Prostate gland (tissue), 2 donors: ENCODE measurements at regions of chr12 and their contacts with region 1.

Region 1: GRCh38 chr12:6825398-6826124 is 2.6 kb upstream of the P3H3 start:
- DNase-seq: peak; percentile 77
- H3K4me3 ChIP-seq: no peak overlapping the region
- H3K27ac ChIP-seq: no peak overlapping the region
- H3K4me1 ChIP-seq: no peaks in the 10 kb centered on the region
- H3K27me3 ChIP-seq: no peaks in the 10 kb centered on the region
- CTCF ChIP-seq: peak; percentile 89 to 94 (median 93)
- POLR2A ChIP-seq: no peak

Region 2: GRCh38 chr12:6528887-6529235 is 296.7 kb before region 1 on chr12:
- intact Hi-C with region 1: no loop called
- DNase-seq: no peak
- H3K4me3 ChIP-seq: no peak overlapping the region
- H3K27ac ChIP-seq: no peak overlapping the region
- H3K4me1 ChIP-seq: peaks cover 6% of the 10 kb centered on the region
- H3K27me3 ChIP-seq: no peaks in the 10 kb centered on the region
- CTCF ChIP-seq: no peak
- POLR2A ChIP-seq: no peak

Region 3: GRCh38 chr12:6653987-6654386 is 171.6 kb before region 1 on chr12:
- intact Hi-C with region 1: no loop called
- DNase-seq: no peak
- H3K4me3 ChIP-seq: no peak overlapping the region
- H3K27ac ChIP-seq: no peak overlapping the region
- H3K4me1 ChIP-seq: no peaks in the 10 kb centered on the region
- H3K27me3 ChIP-seq: no peaks in the 10 kb centered on the region
- CTCF ChIP-seq: no peak
- POLR2A ChIP-seq: no peak

Region 4: DNA sequence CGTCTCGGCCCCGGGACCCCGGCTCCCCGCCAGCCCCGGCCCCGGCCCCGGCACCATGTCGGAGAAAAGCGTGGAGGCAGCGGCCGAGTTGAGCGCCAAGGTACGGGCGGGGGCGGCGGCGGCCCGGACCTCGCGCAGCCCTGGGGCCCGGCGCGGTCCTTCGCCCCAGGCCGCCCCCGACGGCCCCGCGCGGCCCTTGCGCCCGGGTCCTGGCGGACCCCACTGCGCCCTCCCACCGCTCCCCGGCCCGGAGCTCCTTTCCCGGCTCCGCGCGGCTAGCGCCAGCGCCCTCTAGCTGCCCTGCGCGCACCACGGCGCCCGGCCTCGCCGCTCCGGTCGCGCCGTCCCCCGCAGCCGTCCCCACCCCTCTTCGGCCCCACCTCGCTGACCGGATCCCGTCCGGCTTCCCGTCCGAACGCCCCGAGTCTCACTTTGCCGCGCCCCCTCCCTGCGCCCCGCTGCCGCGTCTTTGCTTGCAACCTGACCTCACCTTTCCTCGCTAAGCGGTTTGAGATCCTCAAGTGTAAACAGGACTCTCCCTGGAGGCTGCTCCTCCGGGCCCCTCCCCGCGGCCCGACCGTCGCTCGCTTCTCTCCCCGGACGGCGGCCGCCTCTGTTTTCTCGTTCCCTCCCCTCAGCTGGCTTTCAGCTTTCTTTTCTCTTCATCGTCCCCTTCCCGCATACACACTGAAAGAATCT is 58.8 kb before region 1 on chr12:
- intact Hi-C with region 1: loop called (anchors 5 kb)
- DNase-seq: peak; percentile 83
- H3K4me3 ChIP-seq: peak overlapping the region; percentile 89 to 91
- H3K27ac ChIP-seq: peak overlapping the region; percentile 92 to 99
- H3K4me1 ChIP-seq: peaks cover 12% of the 10 kb centered on the region
- H3K27me3 ChIP-seq: no peaks in the 10 kb centered on the region
- CTCF ChIP-seq: peak; percentile 58 to 91 (median 78)
- POLR2A ChIP-seq: peak; percentile 73

Region 5: DNA sequence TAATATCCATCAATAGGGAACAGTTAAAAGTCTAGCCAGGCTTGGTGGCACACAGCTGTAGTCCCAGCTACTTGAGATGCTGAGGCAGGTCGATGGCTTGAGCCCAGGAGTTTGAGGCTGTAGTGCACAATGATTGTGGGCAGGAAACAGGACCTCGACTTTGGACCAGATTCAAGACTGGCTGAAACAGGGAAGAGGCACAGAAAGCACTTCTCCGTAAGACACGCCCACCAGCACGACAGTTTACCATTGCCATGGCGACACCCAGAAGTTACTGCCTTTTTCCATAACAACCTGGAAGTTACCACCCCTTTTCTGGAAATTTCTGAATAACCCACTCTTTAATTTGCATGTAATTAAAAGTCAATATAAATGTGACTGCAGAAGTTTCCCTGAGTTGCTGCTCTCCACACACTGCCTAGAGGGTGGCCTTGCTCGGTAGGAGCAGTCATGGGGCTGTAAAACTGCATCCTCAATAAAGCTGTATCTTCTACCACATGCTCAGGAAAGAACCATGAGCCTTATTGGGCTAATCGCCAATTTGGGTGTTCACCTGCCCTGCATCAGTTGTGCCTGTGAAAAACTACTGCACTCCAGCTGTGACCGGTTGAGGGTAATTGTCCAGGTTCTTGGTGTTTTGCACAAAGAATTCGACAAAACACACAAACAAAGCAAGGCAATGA is 74.4 kb after region 1 on chr12:
- intact Hi-C with region 1: no loop called
- DNase-seq: no peak
- H3K4me3 ChIP-seq: no peak overlapping the region
- H3K27ac ChIP-seq: no peak overlapping the region
- H3K4me1 ChIP-seq: no peaks in the 10 kb centered on the region
- H3K27me3 ChIP-seq: no peaks in the 10 kb centered on the region
- CTCF ChIP-seq: no peak
- POLR2A ChIP-seq: no peak